OCI-LY7 (cell line): ENCODE measurements at regions of chr22 and their contacts with region 1.

Region 1: GRCh38 chr22:45435544-45436139 is 22.1 kb downstream of the RIBC2 start:
- DNase-seq: peak; percentile 83
- H3K4me3 ChIP-seq: no peak overlapping the region
- H3K27ac ChIP-seq: no peak overlapping the region
- H3K4me1 ChIP-seq: no peaks in the 10 kb centered on the region
- CTCF ChIP-seq: peak; percentile 91

Region 2: DNA sequence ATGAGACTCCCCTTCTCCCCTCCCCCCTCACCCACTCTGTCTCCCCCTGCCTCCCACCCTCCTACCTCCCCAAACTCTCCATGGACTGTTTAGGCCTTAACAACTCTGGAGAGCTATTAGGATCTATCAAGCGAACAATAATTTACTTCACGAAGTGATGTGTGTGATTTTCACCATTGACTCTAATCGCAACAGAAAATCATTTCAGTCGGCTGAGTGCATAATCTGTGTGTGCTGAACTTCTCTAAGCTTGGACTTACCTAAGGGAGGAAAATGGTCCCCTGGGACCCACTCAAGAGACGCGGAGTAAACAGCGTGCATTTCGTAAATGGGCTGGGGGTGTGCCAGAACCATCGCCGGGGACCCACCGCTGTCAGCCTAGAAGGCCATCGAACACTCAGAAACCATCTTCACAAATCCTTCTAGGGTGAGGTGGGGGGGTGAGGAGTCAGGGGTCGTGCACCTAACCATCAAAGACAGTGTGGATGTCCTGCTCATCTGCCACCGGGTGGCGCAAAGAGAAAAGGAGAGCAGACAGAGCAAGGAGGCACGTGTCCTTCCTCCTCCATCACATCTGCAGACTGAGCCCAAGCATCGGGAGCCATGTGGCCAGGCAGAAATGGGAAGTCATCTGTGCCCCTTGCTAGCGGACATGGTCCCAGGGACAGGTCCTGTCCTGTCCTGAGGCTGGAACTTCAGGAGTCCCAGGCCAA is 334.0 kb before region 1 on chr22:
- CTCF ChIA-PET with region 1: no interaction called
- POLR2A ChIA-PET with region 1: no interaction called
- intact Hi-C with region 1: loop called (anchors 2 kb)
- DNase-seq: peak; percentile 77
- H3K4me3 ChIP-seq: no peak overlapping the region
- H3K27ac ChIP-seq: no peak overlapping the region
- H3K4me1 ChIP-seq: peaks cover 6% of the 10 kb centered on the region
- CTCF ChIP-seq: peak; percentile 83

Region 3: DNA sequence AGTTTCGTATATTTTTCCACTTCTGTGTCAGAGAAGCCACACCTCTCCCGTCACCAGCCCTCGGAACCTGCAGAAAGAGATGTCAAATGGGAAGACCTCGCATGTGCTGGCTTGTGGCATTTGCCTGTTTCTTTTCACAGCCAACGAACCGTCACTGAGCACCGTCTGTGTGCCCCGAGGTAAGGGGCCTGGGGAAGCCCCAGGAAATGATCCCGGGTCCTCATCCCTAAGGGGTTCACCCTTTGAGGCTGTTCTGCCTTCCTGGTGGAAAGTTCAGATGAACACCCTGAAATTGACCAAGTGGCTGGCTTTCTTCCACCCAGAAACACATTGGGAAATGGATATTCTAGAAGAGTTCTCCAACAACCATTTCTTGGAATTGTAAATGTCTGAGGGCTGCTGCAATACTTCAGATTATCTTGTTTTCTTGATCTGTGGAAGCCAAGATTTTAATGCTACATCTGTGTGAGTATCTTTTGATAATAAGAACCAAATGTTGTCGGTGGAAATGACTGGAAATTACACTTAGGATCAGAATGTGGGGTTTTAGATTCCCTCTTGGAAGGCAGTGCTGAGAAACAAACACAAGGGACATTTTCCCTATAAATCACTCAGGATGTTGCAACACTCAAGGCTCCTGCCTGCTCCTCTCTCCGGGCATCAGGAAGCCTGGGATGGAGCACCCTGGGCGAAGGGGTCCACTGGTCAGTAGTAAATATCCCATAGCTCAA is 15.4 kb after region 1 on chr22:
- CTCF ChIA-PET with region 1: no interaction called
- POLR2A ChIA-PET with region 1: no interaction called
- intact Hi-C with region 1: no loop called
- DNase-seq: no peak
- H3K4me3 ChIP-seq: no peak overlapping the region
- H3K27ac ChIP-seq: no peak overlapping the region
- H3K4me1 ChIP-seq: no peaks in the 10 kb centered on the region
- CTCF ChIP-seq: no peak

Region 4: DNA sequence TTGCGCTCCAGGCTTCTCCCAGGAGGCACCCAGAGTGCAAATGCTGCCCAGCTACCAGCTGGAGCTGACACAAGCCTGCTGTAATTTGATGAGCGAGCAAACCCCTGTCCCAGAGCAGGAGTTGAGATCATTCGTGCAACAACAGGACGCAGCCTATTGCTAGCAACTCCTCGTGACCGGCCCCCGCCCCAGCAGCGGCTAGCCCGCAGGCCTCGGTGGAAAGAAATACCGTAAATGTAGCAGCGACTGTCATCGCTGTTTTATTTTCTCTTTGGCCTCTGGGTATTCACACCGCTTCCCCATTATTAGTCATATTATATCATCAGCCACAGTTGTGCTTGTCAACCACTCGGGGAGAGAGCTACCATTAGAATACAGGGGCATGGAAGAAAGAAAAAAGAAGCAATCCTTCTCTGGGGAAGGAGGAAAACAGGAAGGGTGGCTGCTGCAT is 176.8 kb after region 1 on chr22:
- CTCF ChIA-PET with region 1: no interaction called
- POLR2A ChIA-PET with region 1: no interaction called
- intact Hi-C with region 1: no loop called
- DNase-seq: no peak
- H3K4me3 ChIP-seq: no peak overlapping the region
- H3K27ac ChIP-seq: no peak overlapping the region
- H3K4me1 ChIP-seq: no peaks in the 10 kb centered on the region
- CTCF ChIP-seq: no peak